Gastrocnemius medialis (tissue), 4 donors: ENCODE measurements at regions of chr12 and their contacts with region 1.

Region 1: GRCh38 chr12:45728630-45729232 is 775 bp upstream of the ARID2 start:
- DNase-seq: peak; percentile 88 to 94
- ATAC-seq: peak; percentile 55 to 58
- H3K4me3 ChIP-seq: peak overlapping the region; percentile 81 to 91 (median 84)
- H3K27ac ChIP-seq: peak overlapping the region; percentile 98 to 100 (median 98)
- H3K4me1 ChIP-seq: peaks cover 46 to 47% of the 10 kb centered on the region in 2 donors
- H3K27me3 ChIP-seq: no peaks in the 10 kb centered on the region
- CTCF ChIP-seq: peak; percentile 91 to 99 (median 98)
- POLR2A ChIP-seq: peak; percentile 81 to 89

Region 2: DNA sequence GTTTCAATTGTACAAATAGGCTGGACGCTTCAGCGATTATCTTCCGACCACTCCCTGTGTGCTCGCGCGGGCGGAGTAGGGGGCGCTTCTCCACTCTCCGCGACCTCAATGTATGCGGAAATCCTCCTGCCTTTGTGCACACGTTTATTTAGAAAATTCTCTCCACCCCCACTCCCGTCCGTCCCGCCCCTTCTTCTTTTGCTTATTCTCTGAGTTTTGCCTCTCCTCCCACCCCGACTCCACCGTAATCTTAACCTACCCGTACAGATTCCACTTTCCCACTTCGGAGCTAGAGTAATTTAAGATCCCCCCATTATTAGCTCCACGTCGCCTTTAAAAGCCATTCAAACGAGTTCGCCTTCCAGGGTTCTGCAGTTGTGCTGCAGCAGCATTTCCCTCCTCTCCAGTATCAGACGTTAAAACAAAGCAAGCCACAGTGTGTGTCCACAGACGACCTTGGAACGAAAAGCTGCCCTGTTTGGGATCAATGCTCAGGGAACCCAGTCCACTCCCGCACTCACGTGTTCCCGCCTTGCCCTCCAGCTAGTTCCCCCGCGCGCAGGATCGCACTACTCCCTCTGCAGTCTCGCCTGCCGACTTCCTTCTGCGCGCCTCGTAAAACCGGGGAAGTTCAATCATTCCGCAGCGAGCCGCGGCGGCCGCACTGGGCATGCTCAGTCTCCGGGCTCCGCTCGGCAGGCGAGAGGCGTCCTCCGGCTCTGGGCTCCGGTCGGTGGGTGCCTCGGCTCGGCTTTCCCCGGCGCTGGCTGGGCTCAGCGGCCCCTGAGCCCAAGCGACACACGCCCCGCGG is 513.1 kb before region 1 on chr12 and contains the start of gene ANO6:
- in situ Hi-C with region 1: loop called in 1 of 4 experiments (anchors 25 kb)
- intact Hi-C with region 1: loop called (anchors 5 kb)
- DNase-seq: peak; percentile 81 to 85
- ATAC-seq: peak; percentile 86 to 90
- H3K4me3 ChIP-seq: peak within 1 kb of the TSS; percentile 78 to 98 (median 94)
- H3K27ac ChIP-seq: peak within 1 kb of the TSS; percentile 91 to 99 (median 96)
- H3K4me1 ChIP-seq: peaks cover 27 to 32% of the 10 kb centered on the region in 2 donors
- H3K27me3 ChIP-seq: no peaks in the 10 kb centered on the region
- CTCF ChIP-seq: peak in 1 of 5 experiments; percentile 42
- POLR2A ChIP-seq: peak; percentile 83
- total RNA-seq, gene ANO6: 75.4 to 100 (median 91.8) TPM

Region 3: DNA sequence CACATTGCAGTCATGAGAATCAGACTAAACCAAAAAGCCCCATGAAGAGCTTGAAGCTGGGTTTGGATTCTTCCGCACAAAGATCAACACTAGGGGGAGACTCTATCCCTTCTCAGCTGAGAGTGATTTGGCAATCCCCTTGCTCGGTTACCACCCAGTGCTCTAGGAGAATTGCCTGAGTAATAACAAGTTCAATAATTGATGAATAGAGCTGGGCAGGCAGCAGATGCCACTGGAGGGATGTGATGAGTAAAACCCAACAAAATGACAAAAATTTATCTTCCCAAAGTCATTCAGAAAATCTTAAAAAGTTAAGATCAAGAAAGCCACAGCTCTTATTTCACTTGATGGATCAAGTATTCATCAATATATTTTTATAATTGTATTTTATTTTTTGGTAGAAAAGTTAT is 184.8 kb before region 1 on chr12:
- in situ Hi-C with region 1: no loop called
- intact Hi-C with region 1: loop called (anchors 2 kb)
- DNase-seq: peak; percentile 13 to 15
- ATAC-seq: peak; percentile 89 to 94
- H3K4me3 ChIP-seq: no peak overlapping the region
- H3K27ac ChIP-seq: no peak overlapping the region
- H3K4me1 ChIP-seq: no peaks in the 10 kb centered on the region
- H3K27me3 ChIP-seq: no peaks in the 10 kb centered on the region
- CTCF ChIP-seq: peak; percentile 47 to 81 (median 68)
- POLR2A ChIP-seq: no peak

Region 4: DNA sequence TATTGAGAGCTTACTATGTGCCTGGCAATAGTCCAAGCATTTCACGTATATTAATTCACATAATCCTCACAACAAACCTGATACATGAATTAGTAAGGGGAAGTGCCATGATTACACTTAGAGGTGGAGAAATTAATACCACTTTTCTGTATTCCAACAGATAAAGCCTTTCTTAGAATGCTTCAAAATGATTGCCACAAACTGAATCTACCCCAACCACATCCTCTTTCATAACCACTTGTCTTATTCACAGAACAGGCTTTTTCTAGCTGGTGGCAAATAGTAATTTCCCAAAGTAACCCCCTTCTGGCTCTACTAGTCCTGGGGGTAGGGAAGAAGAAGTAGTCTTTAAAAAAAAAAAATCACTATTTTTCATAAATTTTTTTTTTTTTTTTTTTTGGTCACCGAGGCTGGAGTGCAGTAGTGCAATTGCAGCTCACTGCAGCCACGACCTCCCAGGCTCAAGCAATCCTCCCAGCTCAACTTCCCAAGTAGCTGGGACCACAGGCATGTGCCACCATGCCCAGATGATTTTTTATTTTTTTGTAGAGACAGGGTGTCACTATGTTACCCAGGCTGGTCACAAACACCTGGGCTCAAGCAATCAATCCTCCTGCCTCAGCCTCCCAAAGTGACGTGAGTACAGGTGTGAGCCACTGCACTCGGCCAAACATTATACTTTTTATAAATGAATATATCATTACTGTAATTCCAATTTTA is 58.2 kb before region 1 on chr12:
- in situ Hi-C with region 1: no loop called
- intact Hi-C with region 1: loop called (anchors 5 kb)
- DNase-seq: no peak
- ATAC-seq: no peak
- H3K4me3 ChIP-seq: no peak overlapping the region
- H3K27ac ChIP-seq: peak overlapping the region; percentile 48 to 59 (median 50)
- H3K4me1 ChIP-seq: peaks cover 24 to 29% of the 10 kb centered on the region in 2 donors
- H3K27me3 ChIP-seq: no peaks in the 10 kb centered on the region
- CTCF ChIP-seq: no peak
- POLR2A ChIP-seq: no peak

Region 5: DNA sequence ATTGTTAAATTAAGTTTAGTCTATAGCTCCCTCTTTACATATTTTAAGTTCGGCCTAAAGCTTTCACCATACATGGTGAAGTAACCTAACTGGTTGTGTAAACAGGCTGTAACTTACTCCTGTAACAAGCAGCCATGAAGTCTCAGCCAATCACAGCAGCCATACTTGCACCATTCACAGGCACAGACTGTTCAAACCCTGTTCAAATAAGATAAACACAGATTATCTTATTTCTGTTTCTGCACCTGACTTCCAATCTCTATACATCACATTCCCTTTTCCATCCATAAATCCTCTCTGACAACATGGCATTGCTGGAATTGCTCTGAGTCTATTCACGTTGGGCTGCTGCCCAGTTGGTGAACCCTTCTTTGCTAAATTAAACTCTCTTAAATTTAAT is 33.7 kb before region 1 on chr12:
- in situ Hi-C with region 1: no loop called
- intact Hi-C with region 1: no loop called
- DNase-seq: no peak
- ATAC-seq: no peak
- H3K4me3 ChIP-seq: no peak overlapping the region
- H3K27ac ChIP-seq: no peak overlapping the region
- H3K4me1 ChIP-seq: peaks cover 0 to 2% of the 10 kb centered on the region in 2 donors
- H3K27me3 ChIP-seq: no peaks in the 10 kb centered on the region
- CTCF ChIP-seq: no peak
- POLR2A ChIP-seq: no peak

Region 6: GRCh38 chr12:46382964-46383653 is 654.4 kb after region 1 on chr12:
- in situ Hi-C with region 1: no loop called
- intact Hi-C with region 1: loop called (anchors 5 kb)
- DNase-seq: peak; percentile 96
- ATAC-seq: peak; percentile 77 to 80
- H3K4me3 ChIP-seq: peak overlapping the region; percentile 66 to 79 (median 74)
- H3K27ac ChIP-seq: peak overlapping the region; percentile 92 to 98 (median 96)
- H3K4me1 ChIP-seq: peaks cover 40 to 43% of the 10 kb centered on the region in 2 donors
- H3K27me3 ChIP-seq: no peaks in the 10 kb centered on the region
- CTCF ChIP-seq: peak in 3 of 5 experiments; percentile 23 to 53 (median 32)
- POLR2A ChIP-seq: peak; percentile 89 to 93